Activated B cell treated with CpG ODN at 0.5 μM for 24 hours (primary cell): ENCODE measurements at regions of chr16 and their contacts with region 1.

Region 1: GRCh38 chr16:1929578-1930337 is 11.5 kb upstream of the HS3ST6 start:
- DNase-seq: peak; percentile 97
- ATAC-seq: peak; percentile 98
- H3K4me3 Mint-ChIP-seq: peak overlapping the region; percentile 64
- H3K27ac Mint-ChIP-seq: no peak overlapping the region
- H3K4me1 Mint-ChIP-seq: peaks cover 2% of the 10 kb centered on the region
- H3K27me3 Mint-ChIP-seq: peaks cover 6% of the 10 kb centered on the region
- CTCF ChIP-seq: peak; percentile 92

Region 2: GRCh38 chr16:1884155-1884760 is 45.5 kb before region 1 on chr16:
- CTCF ChIA-PET with region 1: no interaction called
- POLR2A ChIA-PET with region 1: no interaction called
- intact Hi-C with region 1: no loop called
- DNase-seq: no peak
- ATAC-seq: no peak
- H3K4me3 Mint-ChIP-seq: no peak overlapping the region
- H3K27ac Mint-ChIP-seq: no peak overlapping the region
- H3K4me1 Mint-ChIP-seq: no peaks in the 10 kb centered on the region
- H3K27me3 Mint-ChIP-seq: peaks cover 11% of the 10 kb centered on the region
- CTCF ChIP-seq: no peak

Region 3: DNA sequence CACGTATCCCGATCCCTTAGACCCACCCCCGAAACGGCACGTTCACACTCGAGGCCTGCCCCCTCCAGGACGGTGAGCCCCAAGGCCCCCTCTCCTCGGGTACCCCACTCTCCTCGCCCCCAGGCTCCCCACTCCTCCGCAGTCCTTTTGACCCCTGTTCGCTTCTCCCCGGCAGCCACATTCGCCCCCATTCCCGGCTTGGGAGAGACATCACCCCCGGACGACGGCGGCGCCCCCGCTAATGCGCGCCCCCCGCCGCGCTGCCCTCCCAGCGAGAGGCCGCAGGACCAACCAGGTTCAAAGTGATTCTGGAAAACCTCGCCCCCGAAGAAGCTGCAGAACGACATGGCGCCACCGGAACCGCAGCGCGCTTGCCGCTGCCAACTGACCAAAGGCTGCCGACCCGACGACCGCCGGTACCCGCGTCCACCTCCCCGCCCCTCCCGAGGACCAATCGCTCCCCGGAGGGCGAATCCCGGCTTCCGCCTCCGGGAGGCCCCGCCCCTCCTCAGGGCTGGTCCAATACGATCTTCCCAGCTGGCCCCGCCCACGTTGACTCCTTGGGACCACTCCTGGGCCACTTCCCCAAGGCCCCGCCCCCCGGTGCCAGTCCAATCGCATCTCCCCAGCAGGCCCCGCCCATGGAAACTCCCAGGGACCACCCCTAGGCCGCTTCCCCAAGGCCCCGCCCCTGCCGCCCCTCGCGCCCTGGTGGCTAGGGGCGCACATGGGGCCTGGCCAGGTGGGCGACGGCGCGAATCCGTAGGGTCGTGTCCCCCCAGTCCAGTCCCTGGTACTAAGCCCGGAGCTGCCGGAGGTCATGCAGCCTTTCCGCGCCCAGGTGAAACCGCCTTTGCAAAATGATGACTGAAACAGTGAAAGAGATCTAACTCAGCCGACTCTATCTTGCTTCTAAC is 13.3 kb after region 1 on chr16 and contains the start of gene MSRB1:
- CTCF ChIA-PET with region 1: no interaction called
- POLR2A ChIA-PET with region 1: no interaction called
- intact Hi-C with region 1: loop called (anchors 2 kb)
- DNase-seq: peak; percentile 99
- ATAC-seq: peak; percentile 98
- H3K4me3 Mint-ChIP-seq: peak within 1 kb of the TSS; percentile 87
- H3K27ac Mint-ChIP-seq: peak within 1 kb of the TSS; percentile 74
- H3K4me1 Mint-ChIP-seq: peaks cover 30% of the 10 kb centered on the region
- H3K27me3 Mint-ChIP-seq: no peaks in the 10 kb centered on the region
- CTCF ChIP-seq: no peak
- total RNA-seq, gene MSRB1: 14.7 and 16.6 TPM in 2 replicates